ENCODE measurements at regions of chr2 and their contacts with region 1.

Region 1: DNA sequence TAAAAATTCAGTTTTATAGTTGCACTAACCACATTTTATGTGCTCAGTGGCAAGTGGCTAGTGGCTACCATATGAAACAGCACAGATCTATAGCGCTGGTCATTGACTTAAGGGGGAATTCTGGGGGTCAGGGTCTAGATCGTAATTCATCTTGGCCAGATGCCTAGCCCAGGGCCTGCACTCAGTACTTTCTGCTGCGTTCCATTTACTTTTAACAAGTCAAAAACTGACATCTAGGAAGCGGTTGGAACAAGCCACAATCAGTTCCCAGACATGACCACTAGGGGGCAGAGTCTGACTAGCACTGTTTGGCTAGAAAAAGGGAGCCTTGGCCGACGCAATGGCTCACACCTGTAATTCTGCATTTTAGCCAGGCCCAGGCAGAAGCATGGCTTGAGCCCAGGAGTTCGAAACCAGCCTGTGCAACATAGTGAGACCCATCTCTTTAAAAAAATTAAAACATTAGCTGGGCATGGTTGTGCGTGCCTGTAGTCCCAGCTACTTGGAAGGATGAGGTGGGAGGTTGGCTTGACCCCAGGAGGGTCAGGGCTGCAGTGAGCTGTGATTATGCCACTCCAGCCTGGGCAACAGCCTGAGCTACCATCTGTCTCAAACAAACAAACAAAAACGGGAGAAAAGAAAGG is 9.0 kb upstream of the TMBIM1 start:
- DNase-seq: peak; percentile 75 to 87 (median 83)
- ATAC-seq: peak; percentile 78 to 86 (median 82)
- H3K4me3 ChIP-seq: no peak overlapping the region
- H3K27ac ChIP-seq: no peak overlapping the region
- H3K4me1 ChIP-seq: peaks cover 0 to 7% (median 0%) of the 10 kb centered on the region in 12 donors
- H3K27me3 ChIP-seq: no peaks in the 10 kb centered on the region
- CTCF ChIP-seq: peak; percentile 94 to 99 (median 97)
- POLR2A ChIP-seq: no peak

Region 2: DNA sequence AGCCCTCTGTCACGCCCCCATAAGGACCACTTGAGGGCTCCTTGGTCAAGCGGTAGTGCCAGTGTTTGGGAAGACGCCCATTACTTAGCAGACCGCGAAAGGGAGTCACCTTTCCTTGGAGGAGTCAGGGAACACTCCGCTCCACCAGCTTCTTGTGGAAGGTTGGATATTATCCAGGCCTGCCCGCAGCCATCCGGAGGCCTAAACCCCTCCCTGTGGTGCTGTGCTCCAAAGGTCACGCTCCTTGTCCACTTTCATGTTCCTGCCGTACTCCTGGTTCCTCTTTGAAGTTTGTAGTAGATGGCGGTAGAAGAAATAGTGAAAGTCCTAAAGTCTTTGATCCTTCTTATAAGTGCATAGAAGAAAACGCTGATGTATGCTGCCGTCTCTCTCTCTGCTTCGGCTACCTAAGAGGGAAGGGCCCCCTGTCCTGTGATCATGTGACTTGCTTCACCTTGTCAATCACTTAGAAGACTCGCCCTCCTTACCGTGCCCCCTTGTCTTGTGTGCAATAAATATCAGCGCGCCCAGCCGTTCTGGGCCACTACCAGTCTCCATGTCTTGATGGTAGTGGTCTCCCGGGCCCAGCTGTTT is 53.6 kb after region 1 on chr2:
- intact Hi-C with region 1: loop called (anchors 1 to 5 kb)
- DNase-seq: no peak
- ATAC-seq: no peak
- H3K4me3 ChIP-seq: no peak overlapping the region
- H3K27ac ChIP-seq: no peak overlapping the region
- H3K4me1 ChIP-seq: peaks cover 0 to 11% (median 0%) of the 10 kb centered on the region in 12 donors
- H3K27me3 ChIP-seq: no peaks in the 10 kb centered on the region
- CTCF ChIP-seq: no peak
- POLR2A ChIP-seq: no peak

Region 3: DNA sequence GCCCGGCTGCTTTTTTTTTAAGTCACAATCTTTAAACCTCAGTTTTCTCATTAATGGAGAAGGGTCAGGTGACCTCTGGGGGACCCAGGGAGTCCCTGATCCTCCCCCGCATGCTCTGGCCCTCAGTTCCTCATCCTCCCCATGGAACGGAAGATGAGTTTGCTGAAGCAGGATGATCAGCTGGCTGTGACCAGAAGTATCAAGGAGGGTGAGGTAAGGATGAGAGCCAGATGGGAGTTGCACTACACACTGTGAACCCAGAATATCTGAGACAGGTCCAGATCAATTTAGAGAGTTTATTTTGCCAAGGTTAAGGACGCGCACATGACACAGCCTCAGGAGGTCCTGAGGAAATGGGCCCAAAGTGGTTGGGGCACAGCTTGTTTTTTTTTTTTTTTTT is 59.1 kb after region 1 on chr2:
- intact Hi-C with region 1: loop called (anchors 1 to 5 kb)
- DNase-seq: peak in 1 of 5 donors; percentile 46
- ATAC-seq: peak in 3 of 4 donors; percentile 53 to 69 (median 58)
- H3K4me3 ChIP-seq: no peak overlapping the region
- H3K27ac ChIP-seq: peak overlapping the region in 1 of 12 donors; percentile 50
- H3K4me1 ChIP-seq: peaks cover 0 to 18% (median 0%) of the 10 kb centered on the region in 12 donors
- H3K27me3 ChIP-seq: no peaks in the 10 kb centered on the region
- CTCF ChIP-seq: no peak
- POLR2A ChIP-seq: no peak

Region 4: DNA sequence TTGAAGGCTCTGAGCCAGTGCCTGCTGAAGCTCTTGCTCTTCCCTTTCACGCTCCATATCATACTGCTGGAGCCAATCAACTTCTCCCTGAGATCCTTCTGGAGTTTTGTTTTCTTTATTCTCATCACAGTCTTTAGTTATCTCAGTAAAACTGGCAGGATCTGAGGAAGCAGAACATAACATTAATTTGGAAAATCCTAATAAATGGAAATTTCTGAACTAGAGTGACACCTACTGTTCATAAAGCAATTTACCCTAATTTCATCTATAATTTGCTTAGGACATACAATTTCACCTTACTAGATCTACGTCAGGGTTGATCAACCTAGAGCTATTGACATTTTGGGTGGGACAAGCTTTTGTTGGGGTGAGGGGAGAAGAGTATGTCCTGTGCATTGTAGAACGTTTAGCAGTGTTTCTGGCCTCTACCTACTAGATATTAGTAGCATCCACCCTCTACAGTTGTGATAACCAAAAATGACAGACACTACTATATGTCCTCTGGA is 164.8 kb after region 1 on chr2:
- intact Hi-C with region 1: loop called in 9 of 10 experiments (anchors 5 to 10 kb)
- DNase-seq: no peak
- ATAC-seq: peak in 1 of 4 donors; percentile 26
- H3K4me3 ChIP-seq: no peak overlapping the region
- H3K27ac ChIP-seq: no peak overlapping the region
- H3K4me1 ChIP-seq: peaks cover 0 to 5% (median 1%) of the 10 kb centered on the region in 12 donors
- H3K27me3 ChIP-seq: no peaks in the 10 kb centered on the region
- CTCF ChIP-seq: peak; percentile 28 to 68 (median 50)
- POLR2A ChIP-seq: no peak